Prostate gland (tissue), 2 donors: ENCODE measurements at regions of chr19 and their contacts with region 1.

Region 1: DNA sequence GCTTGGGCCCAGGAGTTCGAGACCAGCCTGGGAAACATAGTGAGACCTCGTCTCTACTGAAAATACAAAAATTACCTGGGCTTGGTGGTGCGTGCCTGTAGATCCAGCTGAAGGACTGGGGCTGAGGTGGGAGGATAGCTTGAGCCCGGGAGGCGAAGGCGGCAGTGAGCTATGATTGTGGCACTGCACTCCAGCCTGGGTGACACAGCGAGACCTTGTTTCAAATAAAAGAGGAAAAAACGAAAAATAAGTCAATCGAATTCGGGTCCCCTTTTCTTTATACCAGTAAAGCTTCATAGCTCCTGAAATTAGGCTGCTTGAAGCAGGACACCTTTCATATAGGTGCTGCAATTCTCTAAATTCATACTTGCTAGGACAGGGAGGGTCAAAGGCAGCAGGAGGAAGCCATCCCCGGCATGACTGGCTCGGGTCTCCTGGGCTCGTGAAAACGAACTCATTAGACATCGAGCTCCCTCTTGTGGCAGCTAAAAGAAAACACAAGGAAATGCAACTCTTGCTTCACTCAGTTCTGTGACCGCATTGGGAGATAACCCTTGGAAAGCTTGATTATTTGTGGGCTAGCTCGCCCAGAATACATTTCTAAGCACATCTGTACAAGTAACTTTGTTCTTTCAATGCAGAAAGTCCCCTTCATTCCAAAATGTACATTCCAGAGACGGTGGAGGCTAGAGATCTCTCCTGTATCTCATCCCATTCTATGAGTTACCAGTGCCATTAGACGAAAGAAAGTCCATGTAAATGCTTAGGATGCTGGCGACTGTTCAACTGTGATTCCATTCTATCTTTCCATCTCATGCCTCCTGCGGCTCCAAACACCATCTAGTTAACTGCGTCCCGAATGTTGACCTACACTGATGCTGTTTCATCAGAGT is 16.8 kb downstream of the FPR2 start:
- DNase-seq: peak; percentile 62
- H3K4me3 ChIP-seq: no peak overlapping the region
- H3K27ac ChIP-seq: no peak overlapping the region
- H3K4me1 ChIP-seq: no peaks in the 10 kb centered on the region
- H3K27me3 ChIP-seq: no peaks in the 10 kb centered on the region
- CTCF ChIP-seq: peak; percentile 33 to 75 (median 63)
- POLR2A ChIP-seq: no peak

Region 2: GRCh38 chr19:51473009-51473707 is 304.7 kb before region 1 on chr19:
- intact Hi-C with region 1: loop called (anchors 10 kb)
- DNase-seq: peak; percentile 75
- H3K4me3 ChIP-seq: no peak overlapping the region
- H3K27ac ChIP-seq: no peak overlapping the region
- H3K4me1 ChIP-seq: no peaks in the 10 kb centered on the region
- H3K27me3 ChIP-seq: no peaks in the 10 kb centered on the region
- CTCF ChIP-seq: peak; percentile 44 to 84 (median 74)
- POLR2A ChIP-seq: no peak

Region 3: GRCh38 chr19:51660975-51661600 is 116.7 kb before region 1 on chr19:
- intact Hi-C with region 1: loop called (anchors 10 kb)
- DNase-seq: peak; percentile 47
- H3K4me3 ChIP-seq: no peak overlapping the region
- H3K27ac ChIP-seq: no peak overlapping the region
- H3K4me1 ChIP-seq: no peaks in the 10 kb centered on the region
- H3K27me3 ChIP-seq: no peaks in the 10 kb centered on the region
- CTCF ChIP-seq: peak in 3 of 4 experiments; percentile 46 to 50 (median 48)
- POLR2A ChIP-seq: no peak